A673 (cell line): ENCODE measurements at regions of chr3 and their contacts with region 1.

Region 1: GRCh38 chr3:118277814-118278213 is 756.8 kb downstream of the IGSF11 start:
- DNase-seq: no peak
- H3K4me3 ChIP-seq: no peak overlapping the region
- H3K27ac ChIP-seq: no peak overlapping the region
- H3K4me1 ChIP-seq: no peaks in the 10 kb centered on the region
- H3K27me3 ChIP-seq: no peaks in the 10 kb centered on the region
- CTCF ChIP-seq: no peak

Region 2: DNA sequence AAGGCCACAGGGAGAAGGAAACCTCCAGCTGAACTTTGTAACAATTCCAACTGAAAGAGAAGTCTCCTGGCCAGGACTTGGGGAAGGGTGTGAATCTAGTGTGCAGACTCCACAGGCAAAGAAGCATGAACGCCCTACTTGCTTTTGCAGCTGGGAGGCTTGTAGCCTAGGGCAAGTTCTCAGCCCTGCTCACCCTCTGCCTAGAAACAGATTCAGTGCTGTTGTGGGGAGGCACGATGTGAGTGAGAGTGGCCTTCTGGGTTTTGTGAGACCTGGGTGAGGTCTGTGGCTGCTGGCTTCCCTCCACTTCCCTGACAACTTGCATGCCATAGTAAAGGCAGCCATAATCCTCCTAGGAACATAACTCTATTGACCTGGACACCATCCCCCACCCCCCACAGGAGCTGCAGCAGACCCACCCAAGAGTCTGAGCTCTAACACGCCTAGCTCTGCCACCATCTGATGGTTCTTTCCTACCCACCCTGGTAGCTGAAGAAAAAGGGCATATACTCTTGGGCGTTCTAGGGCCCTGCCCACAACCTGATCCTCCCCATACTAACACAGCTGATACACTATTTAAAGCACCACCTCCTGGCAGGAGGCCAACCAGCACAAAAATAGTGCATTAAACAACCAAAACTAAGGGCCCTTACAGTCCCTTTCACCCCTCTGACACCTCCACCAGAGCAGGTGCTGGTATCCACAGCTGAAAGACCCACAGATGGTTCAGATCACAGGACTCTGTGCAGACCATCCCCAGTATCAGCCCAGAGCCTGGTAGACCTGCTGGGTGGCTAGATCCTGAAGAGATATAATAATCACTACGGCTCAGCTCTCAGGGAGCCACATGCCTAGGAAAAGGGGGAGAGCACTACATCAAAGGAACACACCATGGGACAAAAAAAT is 330.4 kb after region 1 on chr3:
- CTCF ChIA-PET with region 1: no interaction called
- POLR2A ChIA-PET with region 1: interaction called, 18 read pairs
- intact Hi-C with region 1: no loop called
- DNase-seq: no peak
- H3K4me3 ChIP-seq: no peak overlapping the region
- H3K27ac ChIP-seq: no peak overlapping the region
- H3K4me1 ChIP-seq: no peaks in the 10 kb centered on the region
- H3K27me3 ChIP-seq: no peaks in the 10 kb centered on the region
- CTCF ChIP-seq: no peak

Region 3: GRCh38 chr3:118828351-118828750 is 550.5 kb after region 1 on chr3:
- CTCF ChIA-PET with region 1: no interaction called
- POLR2A ChIA-PET with region 1: no interaction called
- intact Hi-C with region 1: no loop called
- DNase-seq: no peak
- H3K4me3 ChIP-seq: no peak overlapping the region
- H3K27ac ChIP-seq: no peak overlapping the region
- H3K4me1 ChIP-seq: no peaks in the 10 kb centered on the region
- H3K27me3 ChIP-seq: no peaks in the 10 kb centered on the region
- CTCF ChIP-seq: no peak